Naive thymus-derived CD4-positive, alpha-beta T cell (primary cell): ENCODE measurements at regions of chr19 and their contacts with region 1.

Region 1: GRCh38 chr19:44113138-44113783 is at the start of gene ZNF225:
- DNase-seq: peak; percentile 41 to 84 (median 76)
- ATAC-seq: peak; percentile 100
- H3K4me3 ChIP-seq: peak within 1 kb of the TSS; percentile 89
- H3K4me3 Mint-ChIP-seq: peak within 1 kb of the TSS; percentile 95 to 100 (median 99)
- H3K27ac ChIP-seq: peak within 1 kb of the TSS; percentile 68
- H3K27ac Mint-ChIP-seq: peak within 1 kb of the TSS; percentile 82 to 97 (median 88)
- H3K4me1 ChIP-seq: peaks cover 3 to 8% of the 10 kb centered on the region in 2 donors
- H3K4me1 Mint-ChIP-seq: peaks cover 16 to 38% (median 31%) of the 10 kb centered on the region in 7 donors
- H3K27me3 ChIP-seq: no peaks in the 10 kb centered on the region
- H3K27me3 Mint-ChIP-seq: no peaks in the 10 kb centered on the region
- total RNA-seq, gene ZNF225: 0.69 to 13.0 (median 5.1) TPM

Region 2: GRCh38 chr19:43809762-43810696 is 303.2 kb before region 1 on chr19:
- CTCF ChIA-PET with region 1: no interaction called
- POLR2A ChIA-PET with region 1: no interaction called
- intact Hi-C with region 1: no loop called
- DNase-seq: peak in 7 of 9 donors; percentile 14 to 59 (median 49)
- ATAC-seq: peak; percentile 75
- H3K4me3 ChIP-seq: no peak overlapping the region
- H3K4me3 Mint-ChIP-seq: no peak overlapping the region
- H3K27ac ChIP-seq: no peak overlapping the region
- H3K27ac Mint-ChIP-seq: no peak overlapping the region
- H3K4me1 ChIP-seq: no peaks in the 10 kb centered on the region
- H3K4me1 Mint-ChIP-seq: peaks cover 0 to 3% (median 0%) of the 10 kb centered on the region in 7 donors
- H3K27me3 ChIP-seq: no peaks in the 10 kb centered on the region
- H3K27me3 Mint-ChIP-seq: peaks cover 12 to 27% (median 17%) of the 10 kb centered on the region in 5 donors

Region 3: GRCh38 chr19:44025217-44025936 is 87.9 kb before region 1 on chr19 and contains the start of gene ZNF222:
- CTCF ChIA-PET with region 1: no interaction called
- POLR2A ChIA-PET with region 1: no interaction called
- intact Hi-C with region 1: loop called in 1 of 2 experiments (anchors 1 kb)
- DNase-seq: peak; percentile 41 to 78 (median 66)
- ATAC-seq: peak; percentile 99
- H3K4me3 ChIP-seq: peak within 1 kb of the TSS; percentile 76
- H3K4me3 Mint-ChIP-seq: peak within 1 kb of the TSS; percentile 95 to 100 (median 98)
- H3K27ac ChIP-seq: peak within 1 kb of the TSS; percentile 71
- H3K27ac Mint-ChIP-seq: peak within 1 kb of the TSS; percentile 84 to 98 (median 94)
- H3K4me1 ChIP-seq: peaks cover 5 to 9% of the 10 kb centered on the region in 2 donors
- H3K4me1 Mint-ChIP-seq: peaks cover 12 to 40% (median 31%) of the 10 kb centered on the region in 7 donors
- H3K27me3 ChIP-seq: no peaks in the 10 kb centered on the region
- H3K27me3 Mint-ChIP-seq: peaks cover 0 to 9% (median 3%) of the 10 kb centered on the region in 5 donors
- total RNA-seq, gene ZNF222: 2.9 to 10.1 (median 4.5) TPM

Region 4: DNA sequence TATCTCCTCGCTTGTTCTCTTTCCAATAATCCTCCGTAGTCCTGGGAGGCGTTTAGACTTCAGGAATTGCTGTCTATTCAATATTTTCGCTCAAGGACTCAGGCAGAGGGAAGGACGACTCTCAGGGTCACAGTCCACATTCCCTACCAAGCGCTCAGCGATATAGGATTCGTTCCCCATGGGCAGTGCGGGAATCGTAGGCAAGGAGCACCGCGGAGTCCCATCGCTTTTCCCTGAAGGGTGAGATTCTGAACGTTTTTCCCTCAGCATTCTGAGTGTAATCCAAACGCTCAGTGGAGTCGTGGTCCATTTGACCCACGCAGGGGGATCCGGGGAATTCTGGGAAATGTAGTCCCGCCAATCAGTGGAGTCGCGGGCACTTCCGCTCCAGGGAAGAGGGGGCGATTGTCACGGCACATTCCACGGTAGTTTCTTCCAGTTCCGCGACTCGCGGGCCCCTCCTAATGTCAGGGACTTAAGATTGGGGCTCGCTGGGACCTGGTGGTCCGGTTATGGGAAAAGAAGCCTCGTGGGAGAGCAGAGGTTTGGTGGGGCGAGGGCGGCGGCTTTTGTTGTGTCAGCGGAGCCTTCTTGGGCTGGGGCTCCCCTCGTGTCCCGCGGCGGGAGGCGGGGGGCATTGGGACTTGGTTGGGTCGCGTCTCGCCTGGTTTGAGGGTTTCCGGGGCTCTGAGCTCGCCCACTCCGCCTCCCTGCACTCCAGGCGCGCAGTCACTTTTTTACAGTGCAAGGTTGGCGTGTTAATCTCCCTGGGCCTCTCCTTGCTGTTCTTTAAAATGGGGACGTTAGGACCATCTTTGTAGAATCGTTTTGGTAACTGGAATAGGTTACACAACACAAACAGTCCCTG is 28.2 kb after region 1 on chr19 and contains the start of gene ZNF234:
- CTCF ChIA-PET with region 1: no interaction called
- POLR2A ChIA-PET with region 1: interaction called, 3 read pairs
- intact Hi-C with region 1: loop called (anchors 1 to 2 kb)
- DNase-seq: peak; percentile 29 to 69 (median 56)
- ATAC-seq: peak; percentile 92
- H3K4me3 ChIP-seq: peak within 1 kb of the TSS; percentile 80
- H3K4me3 Mint-ChIP-seq: peak within 1 kb of the TSS; percentile 90 to 97 (median 96)
- H3K27ac ChIP-seq: peak within 1 kb of the TSS; percentile 77
- H3K27ac Mint-ChIP-seq: peak within 1 kb of the TSS; percentile 64 to 94 (median 88)
- H3K4me1 ChIP-seq: peaks cover 0 to 12% of the 10 kb centered on the region in 2 donors
- H3K4me1 Mint-ChIP-seq: peaks cover 14 to 30% (median 25%) of the 10 kb centered on the region in 7 donors
- H3K27me3 ChIP-seq: no peaks in the 10 kb centered on the region
- H3K27me3 Mint-ChIP-seq: no peaks in the 10 kb centered on the region
- total RNA-seq, gene ZNF234: 2.8 to 25.2 (median 13.4) TPM

Region 5: DNA sequence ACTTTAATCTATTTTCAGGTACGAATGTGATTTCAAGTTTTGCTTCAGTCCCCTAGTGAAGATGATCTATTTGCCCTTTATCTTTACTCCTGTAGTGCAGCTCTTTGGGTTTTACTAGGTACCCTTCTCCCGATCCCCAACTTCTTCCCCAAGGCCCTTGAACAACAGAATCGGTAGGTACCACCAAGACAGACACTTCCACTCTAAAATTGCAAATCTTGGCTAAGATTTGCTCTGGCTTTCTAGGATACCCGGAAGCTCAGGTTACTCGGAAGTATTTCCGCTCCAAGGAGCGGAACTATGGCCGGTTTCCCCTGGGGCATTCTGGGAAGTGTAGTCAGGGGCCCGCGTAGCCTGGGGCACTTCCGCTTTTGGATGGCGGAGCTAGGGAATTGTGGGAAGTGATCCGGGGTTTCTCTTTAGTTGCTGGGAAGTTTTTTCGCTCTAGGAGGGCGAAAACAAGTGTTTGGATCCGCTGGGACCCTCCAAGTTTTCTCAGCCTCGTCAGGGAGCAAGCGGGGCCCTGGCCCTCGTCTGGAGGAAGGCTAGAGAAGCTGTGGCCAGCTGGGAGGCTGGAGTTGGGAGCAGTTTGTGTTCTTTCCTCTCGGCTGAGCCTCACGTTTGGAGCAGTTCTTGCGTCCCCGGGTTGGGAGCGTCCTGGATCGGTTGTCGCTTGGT is 94.0 kb after region 1 on chr19:
- CTCF ChIA-PET with region 1: no interaction called
- POLR2A ChIA-PET with region 1: interaction called, 4 read pairs
- intact Hi-C with region 1: loop called (anchors 1 kb)
- DNase-seq: peak; percentile 25 to 78 (median 70)
- ATAC-seq: peak; percentile 97
- H3K4me3 ChIP-seq: peak overlapping the region; percentile 79
- H3K4me3 Mint-ChIP-seq: peak overlapping the region; percentile 81 to 95 (median 87)
- H3K27ac ChIP-seq: peak overlapping the region; percentile 75
- H3K27ac Mint-ChIP-seq: peak overlapping the region; percentile 79 to 93 (median 84)
- H3K4me1 ChIP-seq: peaks cover 0 to 11% of the 10 kb centered on the region in 2 donors
- H3K4me1 Mint-ChIP-seq: peaks cover 7 to 15% (median 11%) of the 10 kb centered on the region in 7 donors
- H3K27me3 ChIP-seq: no peaks in the 10 kb centered on the region
- H3K27me3 Mint-ChIP-seq: peaks cover 0 to 22% (median 16%) of the 10 kb centered on the region in 5 donors

Region 6: GRCh38 chr19:44304659-44305193 is 191.5 kb after region 1 on chr19 and contains the start of gene ZNF235:
- CTCF ChIA-PET with region 1: no interaction called
- POLR2A ChIA-PET with region 1: no interaction called
- intact Hi-C with region 1: loop called (anchors 1 kb)
- DNase-seq: peak; percentile 17 to 77 (median 59)
- ATAC-seq: peak; percentile 97
- H3K4me3 ChIP-seq: peak within 1 kb of the TSS; percentile 84
- H3K4me3 Mint-ChIP-seq: peak within 1 kb of the TSS; percentile 88 to 96 (median 93)
- H3K27ac ChIP-seq: peak within 1 kb of the TSS; percentile 65
- H3K27ac Mint-ChIP-seq: peak within 1 kb of the TSS; percentile 20 to 82 (median 77)
- H3K4me1 ChIP-seq: peaks cover 10 to 12% of the 10 kb centered on the region in 2 donors
- H3K4me1 Mint-ChIP-seq: peaks cover 5 to 34% (median 27%) of the 10 kb centered on the region in 7 donors
- H3K27me3 ChIP-seq: no peaks in the 10 kb centered on the region
- H3K27me3 Mint-ChIP-seq: peaks cover 0 to 10% (median 0%) of the 10 kb centered on the region in 5 donors
- total RNA-seq, gene ZNF235: 5.5 to 14.3 (median 6.7) TPM